Esophagus squamous epithelium (tissue), 5 donors: ENCODE measurements at regions of chr7 and their contacts with region 1.

Region 1: GRCh38 chr7:47119261-47119865 is 462.5 kb downstream of the TNS3 start:
- DNase-seq: no peak
- H3K4me3 ChIP-seq: no peak overlapping the region
- H3K27ac ChIP-seq: no peak overlapping the region
- H3K4me1 ChIP-seq: no peaks in the 10 kb centered on the region
- H3K27me3 ChIP-seq: no peaks in the 10 kb centered on the region
- CTCF ChIP-seq: no peak
- POLR2A ChIP-seq: no peak

Region 2: DNA sequence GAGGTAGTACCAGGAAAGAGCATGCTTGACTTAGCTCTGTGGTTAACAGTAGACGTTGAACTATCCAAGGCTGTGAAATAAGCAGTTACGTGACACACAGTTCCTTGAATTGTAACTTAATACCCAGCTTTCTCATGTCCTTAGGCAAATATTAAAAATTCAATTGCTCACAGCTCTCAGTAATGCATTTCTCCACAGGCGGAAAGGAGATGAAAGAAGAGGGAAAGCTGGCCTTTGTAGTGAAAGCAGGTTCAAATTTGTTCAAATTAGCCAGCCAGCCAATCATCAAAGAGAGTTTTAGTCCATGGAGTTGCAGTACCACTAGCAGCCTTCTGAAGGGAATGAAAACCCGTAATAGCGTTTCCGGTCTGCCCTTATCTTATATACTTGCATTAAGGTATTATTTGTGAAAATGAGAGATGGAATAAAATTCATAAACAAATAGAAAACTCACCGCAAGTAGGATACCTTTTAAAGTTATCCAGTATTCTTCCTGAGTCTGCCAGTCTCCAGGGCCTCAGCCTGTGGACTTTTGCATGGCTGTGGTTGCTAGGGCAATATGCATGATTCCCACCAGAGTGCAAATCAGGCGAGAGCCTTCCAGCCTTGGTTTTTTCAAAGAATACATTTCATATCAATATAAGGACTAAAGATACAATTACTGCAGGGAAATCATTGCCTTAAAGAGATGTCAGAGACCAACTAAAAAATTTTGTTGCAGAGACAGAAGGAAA is 333.0 kb before region 1 on chr7:
- intact Hi-C with region 1: no loop called
- DNase-seq: no peak
- H3K4me3 ChIP-seq: no peak overlapping the region
- H3K27ac ChIP-seq: no peak overlapping the region
- H3K4me1 ChIP-seq: peaks cover 0 to 16% (median 10%) of the 10 kb centered on the region in 3 donors
- H3K27me3 ChIP-seq: no peaks in the 10 kb centered on the region
- CTCF ChIP-seq: peak in 2 of 6 experiments; percentile 20 to 51
- POLR2A ChIP-seq: no peak

Region 3: DNA sequence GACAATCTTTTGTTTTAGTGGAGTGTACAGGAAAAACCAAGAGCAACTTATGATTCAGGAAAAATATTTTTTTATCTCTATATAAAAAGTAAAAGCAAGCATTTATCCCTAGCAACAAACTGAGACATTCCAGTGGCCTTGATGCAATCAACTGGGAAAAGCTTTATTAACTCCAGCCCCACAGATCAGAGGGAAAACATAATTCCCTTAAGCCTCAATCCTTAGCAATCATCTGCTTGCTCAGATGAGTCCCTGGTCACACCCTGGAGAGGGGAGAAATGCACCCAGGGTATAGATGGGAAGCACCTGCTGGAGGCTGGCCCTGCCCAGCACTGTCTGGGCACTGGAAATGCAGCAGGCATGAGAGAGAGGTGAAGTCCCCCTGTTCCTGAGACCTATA is 174.0 kb before region 1 on chr7:
- intact Hi-C with region 1: no loop called
- DNase-seq: no peak
- H3K4me3 ChIP-seq: no peak overlapping the region
- H3K27ac ChIP-seq: no peak overlapping the region
- H3K4me1 ChIP-seq: no peaks in the 10 kb centered on the region
- H3K27me3 ChIP-seq: no peaks in the 10 kb centered on the region
- CTCF ChIP-seq: no peak
- POLR2A ChIP-seq: no peak

Region 4: DNA sequence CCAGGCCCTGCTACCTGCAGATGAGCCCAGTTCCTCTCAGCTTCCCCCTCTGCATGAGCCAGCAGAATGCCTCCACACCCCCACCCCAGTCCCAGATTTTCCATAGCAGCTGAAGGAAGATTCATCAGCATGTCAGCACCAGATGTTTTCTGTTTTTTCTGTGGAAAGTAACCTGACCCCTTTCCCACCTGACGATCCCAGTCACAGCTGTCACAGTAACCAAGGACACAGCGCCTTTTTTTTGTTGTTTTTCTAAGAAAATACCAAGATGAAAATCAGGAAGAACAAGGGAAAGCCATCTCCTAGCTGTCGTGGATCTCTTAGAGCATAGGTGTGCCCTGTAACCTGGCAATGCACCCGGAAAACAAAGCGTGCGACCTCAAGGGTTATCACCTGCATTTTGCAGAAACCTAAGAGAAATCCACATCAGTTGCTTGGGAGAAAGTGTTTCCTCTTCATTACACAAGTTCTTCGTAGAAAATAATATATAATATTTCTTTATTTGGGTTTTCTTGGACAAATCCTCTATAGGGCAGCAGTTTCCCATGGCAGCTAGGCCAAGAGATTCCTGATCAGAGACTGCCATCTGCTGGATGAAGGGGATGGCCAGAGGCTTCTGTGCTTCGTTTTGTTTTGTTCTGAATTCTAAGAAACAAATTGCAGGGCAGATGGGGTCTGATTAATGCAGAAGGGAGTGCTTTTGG is 60.6 kb after region 1 on chr7:
- intact Hi-C with region 1: loop called (anchors 10 kb)
- DNase-seq: no peak
- H3K4me3 ChIP-seq: no peak overlapping the region
- H3K27ac ChIP-seq: no peak overlapping the region
- H3K4me1 ChIP-seq: peaks cover 0 to 18% (median 0%) of the 10 kb centered on the region in 3 donors
- H3K27me3 ChIP-seq: peaks cover 0 to 4% (median 0%) of the 10 kb centered on the region in 4 donors
- CTCF ChIP-seq: peak; percentile 29 to 74 (median 62)
- POLR2A ChIP-seq: no peak